ENCODE measurements at regions of chr6 and their contacts with region 1.

Region 1: GRCh38 chr6:14660806-14661579 is 543.4 kb downstream of the CD83 start:
- DNase-seq: peak; percentile 59
- H3K4me3 Mint-ChIP-seq: no peak overlapping the region
- H3K27ac Mint-ChIP-seq: no peak overlapping the region
- H3K4me1 Mint-ChIP-seq: peaks cover 59% of the 10 kb centered on the region
- H3K27me3 Mint-ChIP-seq: peaks cover 16% of the 10 kb centered on the region

Region 2: DNA sequence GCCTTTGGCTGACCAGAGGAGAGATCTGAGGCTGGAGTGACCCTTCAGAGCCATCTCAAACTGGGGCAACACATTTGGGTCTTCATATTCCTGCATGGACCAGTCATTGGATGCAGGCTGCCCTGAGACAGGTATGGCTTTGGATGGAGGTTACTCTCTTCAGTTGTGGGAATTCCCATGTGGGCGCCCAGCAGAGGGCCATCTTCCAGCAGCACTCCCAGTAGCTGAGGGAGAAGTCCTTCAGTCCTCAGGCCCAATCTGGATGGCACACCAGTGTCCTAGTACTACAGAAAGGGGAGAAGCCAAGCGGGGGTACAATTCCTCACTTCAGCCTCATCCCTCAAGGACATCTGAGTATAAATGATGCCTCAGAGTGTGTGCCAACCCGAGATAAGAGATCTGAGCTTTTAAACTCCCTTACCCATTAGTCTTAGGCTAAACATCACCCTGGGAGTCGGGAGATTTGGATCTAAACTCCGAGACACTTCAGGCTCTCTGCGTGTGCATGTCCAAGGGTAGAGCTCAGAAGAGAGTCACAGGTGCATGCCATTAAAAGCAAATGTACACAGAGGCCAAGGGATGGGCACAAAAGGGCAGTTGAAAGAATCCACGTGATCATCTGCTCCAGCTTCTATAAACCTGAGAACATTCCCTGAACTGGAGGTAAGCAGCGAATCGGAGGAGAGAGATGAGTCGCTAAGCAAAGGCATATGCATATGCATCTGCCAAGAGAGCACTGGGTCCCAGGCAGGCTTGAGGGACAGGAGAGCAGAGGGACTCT is 338.8 kb before region 1 on chr6:
- intact Hi-C with region 1: no loop called
- DNase-seq: no peak
- H3K4me3 Mint-ChIP-seq: no peak overlapping the region
- H3K27ac Mint-ChIP-seq: no peak overlapping the region
- H3K4me1 Mint-ChIP-seq: peaks cover 4% of the 10 kb centered on the region
- H3K27me3 Mint-ChIP-seq: peaks cover 8% of the 10 kb centered on the region

Region 3: DNA sequence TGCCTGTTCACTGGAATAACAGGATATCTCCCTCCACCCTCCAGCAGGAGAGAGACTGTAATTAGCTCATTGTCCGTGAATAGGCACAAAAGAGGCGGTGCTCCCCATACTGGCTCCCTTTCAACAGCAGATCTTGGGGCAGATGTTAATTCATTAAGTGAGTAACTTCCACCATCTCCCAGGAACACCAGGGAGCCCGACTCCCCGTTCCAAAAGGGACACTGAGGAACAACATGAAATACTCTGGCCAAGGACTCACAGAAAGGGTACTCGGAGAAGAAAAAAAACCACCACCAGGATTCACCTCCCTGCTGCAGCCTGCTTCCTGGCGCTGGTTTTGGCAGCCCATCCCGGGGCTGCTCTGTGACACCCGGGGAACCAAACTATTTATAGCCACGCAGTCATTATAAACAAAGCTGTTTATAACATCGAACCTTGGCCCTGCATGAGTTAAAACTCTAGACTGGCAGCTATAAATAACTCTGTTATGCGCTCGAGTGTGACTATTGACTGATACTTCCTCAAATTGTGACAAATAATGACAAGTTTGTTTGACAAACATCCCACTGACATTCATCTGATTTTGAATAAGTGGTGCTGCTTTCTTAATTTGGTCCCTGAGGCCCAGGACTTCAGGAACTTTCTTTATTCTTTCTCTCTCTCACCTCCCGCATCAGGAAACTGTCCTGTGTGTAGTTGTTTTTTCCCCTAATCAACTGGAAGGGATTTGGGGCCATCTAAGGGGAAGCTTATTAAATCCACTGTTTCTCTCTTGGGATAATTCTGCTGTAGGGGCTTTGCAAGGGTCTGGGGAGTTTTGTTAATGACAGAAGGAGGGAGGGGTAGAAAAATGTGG is 21.9 kb before region 1 on chr6:
- intact Hi-C with region 1: loop called (anchors 1 kb)
- DNase-seq: no peak
- H3K4me3 Mint-ChIP-seq: no peak overlapping the region
- H3K27ac Mint-ChIP-seq: no peak overlapping the region
- H3K4me1 Mint-ChIP-seq: peaks cover 70% of the 10 kb centered on the region
- H3K27me3 Mint-ChIP-seq: peaks cover 8% of the 10 kb centered on the region